GM18951 (cell line): ENCODE measurements at regions of chr2 and their contacts with region 1.

Region 1: DNA sequence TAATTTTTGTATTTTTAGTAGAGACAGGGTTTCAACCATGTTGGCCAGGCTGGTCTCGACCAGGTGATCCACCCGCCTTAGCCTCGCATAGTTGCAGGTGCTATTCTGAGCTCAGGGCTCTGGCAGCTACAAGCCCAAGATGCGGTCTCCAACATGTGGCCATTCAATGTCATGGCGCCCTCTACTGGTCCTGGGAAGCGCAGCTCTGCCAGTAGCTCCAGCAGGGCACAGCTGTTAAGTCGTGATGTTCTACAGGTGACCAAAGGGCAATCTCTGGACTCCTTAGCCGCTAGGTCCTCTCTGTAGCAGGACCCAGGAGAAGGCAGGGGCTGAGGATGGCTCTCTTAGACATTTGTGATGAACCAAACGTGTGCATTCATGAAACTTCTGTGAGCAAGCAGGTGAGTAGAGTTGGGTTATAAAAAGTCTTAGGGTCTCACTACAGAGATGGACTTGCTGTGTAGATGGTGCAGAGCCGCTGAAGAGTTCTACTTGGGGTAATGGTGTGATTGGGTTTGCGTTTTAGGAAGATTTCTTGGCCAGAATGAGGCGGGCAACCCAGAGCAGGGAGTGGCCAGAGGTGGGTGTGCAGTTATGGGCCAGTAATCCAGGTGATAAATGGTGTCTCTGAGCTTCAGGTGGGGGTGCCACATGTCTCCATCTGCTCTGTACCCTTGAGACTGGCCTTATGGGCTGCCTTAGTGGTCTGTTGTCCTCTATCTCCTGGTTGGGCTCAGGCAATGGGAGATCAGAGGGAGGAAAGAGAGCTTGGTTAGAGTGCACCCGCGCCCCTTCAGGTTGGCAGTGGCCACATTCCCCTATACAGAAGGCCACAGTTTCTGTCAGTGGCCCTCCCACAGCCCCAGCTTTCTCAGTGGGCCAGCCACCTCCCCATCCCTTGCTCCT is 31.0 kb downstream of the IL37 start:
- POLR2A ChIP-seq: no peak

Region 2: GRCh38 chr2:112623913-112624777 is 317.9 kb before region 1 on chr2:
- in situ Hi-C with region 1: loop called (anchors 25 kb)
- POLR2A ChIP-seq: no peak

Region 3: GRCh38 chr2:112749755-112750559 is 192.0 kb before region 1 on chr2:
- in situ Hi-C with region 1: no loop called
- POLR2A ChIP-seq: no peak